Calu3 (cell line): ENCODE measurements at regions of chr14 and their contacts with region 1.

Region 1: DNA sequence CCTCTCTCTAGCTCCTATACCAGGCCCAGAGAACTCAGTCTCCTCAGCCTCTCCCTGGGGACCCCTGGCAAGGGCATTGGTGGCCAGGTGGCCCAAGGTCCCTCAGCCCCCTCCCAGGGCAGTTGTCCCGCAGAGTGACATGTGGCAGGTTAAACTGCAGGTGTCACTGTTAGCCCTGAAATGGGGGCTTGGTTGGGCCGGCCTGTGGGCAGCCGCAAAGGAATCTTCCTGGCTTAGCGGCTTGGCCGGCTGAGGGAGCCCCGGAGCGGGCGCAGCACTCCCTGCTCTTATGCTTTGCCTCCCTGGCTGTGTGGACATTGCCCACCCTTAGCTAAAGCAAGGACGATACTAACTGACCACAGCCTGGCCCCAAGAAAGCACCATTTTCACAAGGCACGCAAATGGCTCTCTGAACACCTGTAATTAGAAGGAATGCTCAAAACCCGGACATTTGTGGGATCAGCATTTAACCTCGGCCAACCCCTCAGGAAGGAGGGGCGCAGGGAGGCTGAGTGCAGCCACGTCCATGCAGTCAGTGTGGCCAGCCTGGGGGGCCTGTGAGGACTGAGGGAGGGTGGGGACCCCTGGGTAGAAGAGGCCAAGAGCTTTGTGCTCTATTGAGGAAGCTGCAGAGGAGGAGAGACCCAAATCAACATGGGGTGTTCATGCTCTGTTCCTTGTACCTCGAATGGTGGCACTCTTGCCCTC is 82.2 kb downstream of the PAPOLA start:
- DNase-seq: peak; percentile 70
- H3K4me3 Mint-ChIP-seq: no peak overlapping the region
- H3K27ac Mint-ChIP-seq: no peak overlapping the region
- H3K4me1 Mint-ChIP-seq: no peaks in the 10 kb centered on the region
- H3K27me3 Mint-ChIP-seq: peaks cover 13% of the 10 kb centered on the region
- CTCF ChIP-seq: peak; percentile 38

Region 2: GRCh38 chr14:96666088-96666487 is 81.7 kb after region 1 on chr14:
- CTCF ChIA-PET with region 1: no interaction called
- intact Hi-C with region 1: loop called (anchors 5 kb)
- DNase-seq: no peak
- H3K4me3 Mint-ChIP-seq: no peak overlapping the region
- H3K27ac Mint-ChIP-seq: no peak overlapping the region
- H3K4me1 Mint-ChIP-seq: no peaks in the 10 kb centered on the region
- H3K27me3 Mint-ChIP-seq: peaks cover 88% of the 10 kb centered on the region
- CTCF ChIP-seq: no peak

Region 3: DNA sequence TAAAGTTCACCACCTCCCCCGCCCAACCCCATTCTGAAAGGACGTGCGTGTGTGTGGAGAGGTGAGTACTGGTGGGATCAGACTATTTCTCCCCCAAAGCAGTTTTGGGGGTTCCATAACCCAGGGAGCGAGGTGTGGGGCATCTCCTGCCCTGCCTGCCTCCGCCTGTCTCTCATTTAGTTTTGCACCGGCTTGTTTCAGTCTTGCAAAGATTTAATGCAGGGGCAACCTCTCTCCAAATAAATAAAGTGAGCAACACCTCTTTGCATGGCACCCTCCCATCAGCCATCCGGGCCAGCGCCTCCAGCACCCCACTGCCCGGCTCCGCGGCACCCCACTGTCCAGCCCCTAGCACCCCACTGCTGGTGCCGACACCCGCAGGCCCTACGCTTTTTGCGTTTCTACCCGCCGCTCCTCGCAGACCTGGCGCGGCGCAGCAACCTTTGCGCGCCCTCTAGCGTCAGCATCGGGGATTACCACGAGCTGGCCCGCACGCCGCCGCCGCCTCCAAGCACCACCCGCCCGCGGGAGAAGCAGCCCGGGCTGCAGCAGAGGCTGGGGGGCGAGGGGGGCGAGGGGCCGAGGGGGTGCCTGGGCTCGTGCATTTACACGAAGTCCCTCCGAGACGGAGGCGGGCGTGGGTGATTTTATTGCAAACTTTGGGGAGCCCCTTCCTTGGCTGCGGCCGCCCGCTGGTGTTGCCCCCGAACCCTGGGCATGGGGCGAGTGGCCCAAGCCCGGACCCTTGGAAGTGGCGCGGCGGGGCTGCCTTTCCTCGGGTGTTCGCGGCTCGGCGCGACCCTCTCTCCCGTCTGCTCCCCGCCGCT is 157.0 kb after region 1 on chr14:
- CTCF ChIA-PET with region 1: interaction called, 4 read pairs
- intact Hi-C with region 1: loop called (anchors 1 kb)
- DNase-seq: peak; percentile 74
- H3K4me3 Mint-ChIP-seq: peak overlapping the region; percentile 71
- H3K27ac Mint-ChIP-seq: no peak overlapping the region
- H3K4me1 Mint-ChIP-seq: peaks cover 9% of the 10 kb centered on the region
- H3K27me3 Mint-ChIP-seq: peaks cover 89% of the 10 kb centered on the region
- CTCF ChIP-seq: peak; percentile 80

Region 4: DNA sequence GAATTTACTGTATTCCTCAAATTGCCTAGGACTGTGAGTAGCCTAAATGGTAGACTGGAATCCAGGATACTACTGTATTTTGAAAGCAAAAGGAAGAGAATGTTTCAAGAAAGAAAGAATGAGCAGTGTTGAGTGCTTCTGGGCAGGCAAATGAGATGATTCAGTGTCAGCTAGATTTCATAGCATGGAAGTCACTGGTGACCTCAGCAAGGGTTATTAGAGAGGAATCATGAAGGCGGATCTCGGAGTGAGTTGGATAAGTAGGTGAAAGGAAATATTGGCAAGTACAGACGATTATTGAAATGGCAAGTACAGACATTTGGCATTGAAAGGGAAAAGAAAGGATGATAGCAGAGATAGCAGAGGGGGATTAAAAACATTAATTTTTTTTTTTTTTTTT is 239.9 kb after region 1 on chr14:
- CTCF ChIA-PET with region 1: no interaction called
- intact Hi-C with region 1: no loop called
- DNase-seq: no peak
- H3K4me3 Mint-ChIP-seq: no peak overlapping the region
- H3K27ac Mint-ChIP-seq: no peak overlapping the region
- H3K4me1 Mint-ChIP-seq: peaks cover 13% of the 10 kb centered on the region
- H3K27me3 Mint-ChIP-seq: no peaks in the 10 kb centered on the region
- CTCF ChIP-seq: no peak